CD14-positive monocyte (primary cell): ENCODE measurements at regions of chr20 and their contacts with region 1.

Region 1: GRCh38 chr20:46363800-46364634 is 42.4 kb downstream of the ELMO2 start:
- DNase-seq: peak; percentile 74 to 90 (median 80)
- H3K4me3 ChIP-seq: peak overlapping the region; percentile 60 to 85 (median 70)
- H3K4me3 Mint-ChIP-seq: peak overlapping the region; percentile 87 to 93
- H3K27ac ChIP-seq: peak overlapping the region; percentile 86 to 98
- H3K27ac Mint-ChIP-seq: peak overlapping the region; percentile 89 to 99 (median 97)
- H3K4me1 ChIP-seq: peaks cover 51 to 53% of the 10 kb centered on the region in 2 donors
- H3K4me1 Mint-ChIP-seq: peaks cover 51% of the 10 kb centered on the region
- H3K27me3 ChIP-seq: no peaks in the 10 kb centered on the region
- H3K27me3 Mint-ChIP-seq: peaks cover 0 to 5% (median 0%) of the 10 kb centered on the region in 3 donors
- CTCF ChIP-seq: no peak

Region 2: DNA sequence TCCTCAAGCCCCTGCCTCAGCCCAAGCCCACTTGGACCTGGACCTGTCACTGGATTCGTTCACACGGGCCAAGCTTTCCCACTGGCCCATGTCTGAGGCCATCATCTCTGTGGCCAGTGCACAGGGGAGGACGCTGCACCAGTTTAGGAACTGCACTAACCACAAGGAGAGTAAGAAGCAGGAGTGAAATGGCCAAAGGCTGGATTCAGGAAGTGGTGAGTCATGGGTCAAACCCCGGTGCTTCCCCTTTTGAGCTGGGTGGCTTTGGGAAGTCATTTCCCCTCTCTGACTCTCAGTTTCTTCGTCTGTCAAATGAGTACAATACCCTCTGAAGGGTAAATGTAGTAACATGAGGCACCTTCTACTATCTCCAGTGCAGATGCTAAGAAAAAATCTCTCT is 158.0 kb before region 1 on chr20:
- intact Hi-C with region 1: loop called in 1 of 2 experiments (anchors 5 kb)
- DNase-seq: peak; percentile 89 to 98 (median 97)
- H3K4me3 ChIP-seq: peak overlapping the region in 1 of 3 experiments; percentile 69
- H3K4me3 Mint-ChIP-seq: peak overlapping the region; percentile 63 to 88
- H3K27ac ChIP-seq: peak overlapping the region; percentile 75 to 81
- H3K27ac Mint-ChIP-seq: peak overlapping the region; percentile 95 to 99 (median 97)
- H3K4me1 ChIP-seq: peaks cover 74 to 84% of the 10 kb centered on the region in 2 donors
- H3K4me1 Mint-ChIP-seq: peaks cover 76% of the 10 kb centered on the region
- H3K27me3 ChIP-seq: peaks cover 0 to 11% of the 10 kb centered on the region in 2 donors
- H3K27me3 Mint-ChIP-seq: peaks cover 5 to 27% (median 17%) of the 10 kb centered on the region in 3 donors
- CTCF ChIP-seq: no peak

Region 3: GRCh38 chr20:46406199-46406985 is 42.4 kb after region 1 on chr20 and contains the start of gene ELMO2:
- intact Hi-C with region 1: loop called in 1 of 2 experiments (anchors 2 kb)
- DNase-seq: peak; percentile 89 to 93 (median 91)
- H3K4me3 ChIP-seq: peak within 1 kb of the TSS; percentile 65 to 92 (median 65)
- H3K4me3 Mint-ChIP-seq: peak within 1 kb of the TSS; percentile 92 to 97
- H3K27ac ChIP-seq: peak within 1 kb of the TSS; percentile 61 to 85
- H3K27ac Mint-ChIP-seq: peak within 1 kb of the TSS; percentile 85 to 96 (median 94)
- H3K4me1 ChIP-seq: peaks cover 51 to 62% of the 10 kb centered on the region in 2 donors
- H3K4me1 Mint-ChIP-seq: peaks cover 62% of the 10 kb centered on the region
- H3K27me3 ChIP-seq: no peaks in the 10 kb centered on the region
- H3K27me3 Mint-ChIP-seq: peaks cover 0 to 3% (median 2%) of the 10 kb centered on the region in 3 donors
- CTCF ChIP-seq: peak; percentile 14
- polyA plus RNA-seq, gene ELMO2: 35.3 to 53.1 (median 42.3) TPM

Region 4: GRCh38 chr20:46416421-46416820 is 52.4 kb after region 1 on chr20:
- intact Hi-C with region 1: no loop called
- DNase-seq: no peak
- H3K4me3 ChIP-seq: no peak overlapping the region
- H3K4me3 Mint-ChIP-seq: no peak overlapping the region
- H3K27ac ChIP-seq: no peak overlapping the region
- H3K27ac Mint-ChIP-seq: no peak overlapping the region
- H3K4me1 ChIP-seq: no peaks in the 10 kb centered on the region
- H3K4me1 Mint-ChIP-seq: no peaks in the 10 kb centered on the region
- H3K27me3 ChIP-seq: peaks cover 0 to 7% of the 10 kb centered on the region in 2 donors
- H3K27me3 Mint-ChIP-seq: peaks cover 6 to 16% (median 8%) of the 10 kb centered on the region in 3 donors
- CTCF ChIP-seq: no peak